AG04450 (cell line): ENCODE measurements at regions of chr13 and their contacts with region 1.

Region 1: DNA sequence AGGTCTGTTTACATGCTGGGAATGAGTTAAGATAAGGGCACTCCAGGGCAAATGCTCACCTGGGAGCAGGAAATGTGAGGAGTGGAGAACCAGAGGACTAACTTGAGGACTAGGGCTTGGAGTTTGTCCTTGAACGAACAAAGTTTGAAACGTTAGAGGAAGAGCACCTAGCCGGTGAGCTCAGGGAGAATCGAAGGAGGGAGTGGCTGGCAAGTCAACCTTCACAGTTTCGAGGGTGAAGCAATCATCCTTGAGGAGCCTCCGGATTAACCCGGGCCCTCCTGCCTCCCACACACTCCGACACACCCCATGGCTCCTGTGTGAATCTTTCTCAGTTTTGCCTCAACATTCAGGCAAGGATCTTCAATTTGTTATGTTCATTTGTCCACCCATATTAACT is 58.6 kb downstream of the LMO7 start:
- DNase-seq: no peak
- H3K4me3 ChIP-seq: no peak overlapping the region
- H3K27ac ChIP-seq: no peak overlapping the region
- H3K27me3 ChIP-seq: no peaks in the 10 kb centered on the region
- CTCF ChIP-seq: no peak

Region 2: DNA sequence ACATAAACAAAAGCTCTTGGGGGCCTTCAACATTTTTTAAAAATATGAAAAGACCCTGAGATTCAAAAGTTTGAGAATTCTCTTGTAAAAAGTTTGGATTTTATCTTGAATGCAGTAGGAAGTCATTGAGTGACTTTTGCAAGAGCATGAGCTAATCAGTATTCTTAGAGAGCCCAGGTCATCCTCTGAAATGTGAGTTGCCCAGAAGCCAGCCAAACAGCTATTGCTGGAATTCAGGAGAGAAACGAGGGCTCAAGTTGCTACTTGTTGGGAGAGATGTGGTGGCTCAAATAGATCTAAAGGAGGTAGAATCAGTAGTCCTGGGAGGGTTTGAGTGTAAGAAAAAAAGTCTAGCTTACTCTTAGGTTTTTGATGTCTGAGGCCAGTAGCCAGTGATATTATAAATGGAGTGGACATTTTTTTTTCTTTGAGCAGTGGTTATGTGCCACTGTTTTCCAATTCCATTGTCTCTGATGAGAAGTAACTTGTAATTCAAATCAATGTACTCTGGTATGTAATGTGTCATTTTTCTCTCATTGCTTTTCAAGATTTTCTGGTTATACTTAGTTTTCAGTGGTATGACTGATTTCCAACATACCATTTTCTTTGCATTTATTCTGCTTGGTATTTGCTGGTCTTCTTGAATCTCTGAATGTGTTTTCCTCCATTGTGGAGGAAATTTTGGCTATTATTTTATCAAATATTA is 27.9 kb before region 1 on chr13:
- CTCF ChIA-PET with region 1: interaction called, 16 read pairs
- POLR2A ChIA-PET with region 1: no interaction called
- DNase-seq: no peak
- H3K4me3 ChIP-seq: no peak overlapping the region
- H3K27ac ChIP-seq: no peak overlapping the region
- H3K27me3 ChIP-seq: no peaks in the 10 kb centered on the region
- CTCF ChIP-seq: no peak

Region 3: DNA sequence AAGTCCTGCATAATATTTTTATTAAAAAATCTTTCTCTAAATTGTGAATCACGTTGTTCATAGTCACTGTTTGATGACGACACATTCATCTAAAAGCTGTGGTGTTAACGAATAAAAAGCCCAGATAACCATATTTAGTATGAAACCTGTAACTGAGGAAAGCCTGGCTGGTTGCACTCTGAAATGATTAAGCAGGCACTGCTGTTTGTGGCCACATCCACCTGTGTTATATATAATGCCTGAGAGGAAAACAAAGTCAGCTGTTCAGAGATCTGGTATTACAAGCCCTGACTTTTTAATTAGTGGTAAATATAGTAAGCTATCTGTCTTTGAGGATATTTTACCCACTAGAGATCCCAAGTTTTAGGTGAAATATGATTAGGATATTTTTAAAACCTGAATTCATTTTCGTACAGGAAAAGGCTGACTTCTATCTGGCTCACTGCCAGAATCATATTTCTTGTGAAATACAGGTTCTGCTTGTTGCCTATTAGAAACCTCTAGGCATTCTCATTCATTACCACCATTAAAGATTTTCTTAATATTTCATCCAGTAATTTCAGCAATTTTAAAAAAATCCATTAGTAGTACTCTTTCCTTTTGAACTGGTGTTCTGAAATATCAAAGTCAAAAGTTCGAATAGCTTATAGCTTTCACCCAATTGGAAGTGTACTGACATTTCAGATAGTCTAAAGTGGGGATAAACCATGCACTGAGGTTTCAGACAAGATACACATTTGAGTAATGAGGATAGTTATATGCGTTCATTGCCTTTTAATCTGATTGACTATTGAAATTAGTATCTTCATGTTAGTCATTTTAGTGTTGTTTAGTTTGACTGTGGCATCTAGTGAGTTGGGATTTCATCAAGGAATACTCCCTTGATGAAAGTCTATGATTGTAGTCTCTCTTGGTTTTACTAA is 21.1 kb after region 1 on chr13:
- CTCF ChIA-PET with region 1: interaction called, 21 read pairs
- POLR2A ChIA-PET with region 1: no interaction called
- DNase-seq: no peak
- H3K4me3 ChIP-seq: no peak overlapping the region
- H3K27ac ChIP-seq: no peak overlapping the region
- H3K27me3 ChIP-seq: no peaks in the 10 kb centered on the region
- CTCF ChIP-seq: no peak

Region 4: DNA sequence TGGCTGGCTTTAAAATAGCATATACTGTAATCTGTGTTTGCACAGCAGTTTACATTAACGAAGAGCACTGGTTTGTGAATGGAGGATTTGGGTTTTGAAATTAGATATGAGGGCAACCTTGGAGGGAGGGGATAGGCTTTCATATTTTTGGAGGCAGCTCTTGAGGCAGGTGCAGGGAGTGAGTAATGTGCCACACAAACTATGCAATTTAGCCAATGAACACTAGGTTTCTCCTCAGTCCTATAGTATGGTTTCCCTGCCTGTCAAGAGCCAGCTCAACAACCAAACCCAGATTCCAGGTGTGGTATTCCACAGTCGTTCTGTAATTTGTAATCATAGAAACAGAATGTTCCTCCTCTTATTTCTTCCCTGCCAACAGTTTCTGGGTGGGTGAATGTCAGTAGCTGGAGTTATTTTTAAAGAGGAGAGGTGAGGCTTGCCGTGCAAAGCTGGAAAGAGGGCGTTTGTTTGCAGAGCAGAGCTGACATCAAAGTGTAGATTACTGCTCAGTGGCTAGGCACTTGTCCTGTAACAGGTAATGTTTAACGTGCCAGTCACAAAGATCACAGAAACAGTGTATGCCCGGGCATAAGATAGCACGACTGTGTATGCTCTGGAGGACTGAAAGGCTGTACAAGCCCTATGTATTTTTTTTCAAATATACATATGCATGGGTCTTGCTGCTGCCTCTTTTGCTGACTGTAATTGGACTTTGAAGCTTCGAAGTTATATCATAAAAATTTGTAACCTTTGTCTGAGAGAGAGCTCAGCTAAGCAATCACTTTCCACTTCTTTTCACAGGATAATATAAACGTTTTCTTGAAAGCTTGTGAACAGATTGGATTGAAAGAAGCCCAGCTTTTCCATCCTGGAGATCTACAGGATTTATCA is 65.7 kb after region 1 on chr13:
- CTCF ChIA-PET with region 1: interaction called, 13 read pairs
- POLR2A ChIA-PET with region 1: no interaction called
- DNase-seq: no peak
- H3K4me3 ChIP-seq: peak overlapping the region; percentile 18; the same call in 1 of the 2 replicates
- H3K27ac ChIP-seq: no peak overlapping the region
- H3K27me3 ChIP-seq: no peaks in the 10 kb centered on the region
- CTCF ChIP-seq: peak; percentile 31

Region 5: DNA sequence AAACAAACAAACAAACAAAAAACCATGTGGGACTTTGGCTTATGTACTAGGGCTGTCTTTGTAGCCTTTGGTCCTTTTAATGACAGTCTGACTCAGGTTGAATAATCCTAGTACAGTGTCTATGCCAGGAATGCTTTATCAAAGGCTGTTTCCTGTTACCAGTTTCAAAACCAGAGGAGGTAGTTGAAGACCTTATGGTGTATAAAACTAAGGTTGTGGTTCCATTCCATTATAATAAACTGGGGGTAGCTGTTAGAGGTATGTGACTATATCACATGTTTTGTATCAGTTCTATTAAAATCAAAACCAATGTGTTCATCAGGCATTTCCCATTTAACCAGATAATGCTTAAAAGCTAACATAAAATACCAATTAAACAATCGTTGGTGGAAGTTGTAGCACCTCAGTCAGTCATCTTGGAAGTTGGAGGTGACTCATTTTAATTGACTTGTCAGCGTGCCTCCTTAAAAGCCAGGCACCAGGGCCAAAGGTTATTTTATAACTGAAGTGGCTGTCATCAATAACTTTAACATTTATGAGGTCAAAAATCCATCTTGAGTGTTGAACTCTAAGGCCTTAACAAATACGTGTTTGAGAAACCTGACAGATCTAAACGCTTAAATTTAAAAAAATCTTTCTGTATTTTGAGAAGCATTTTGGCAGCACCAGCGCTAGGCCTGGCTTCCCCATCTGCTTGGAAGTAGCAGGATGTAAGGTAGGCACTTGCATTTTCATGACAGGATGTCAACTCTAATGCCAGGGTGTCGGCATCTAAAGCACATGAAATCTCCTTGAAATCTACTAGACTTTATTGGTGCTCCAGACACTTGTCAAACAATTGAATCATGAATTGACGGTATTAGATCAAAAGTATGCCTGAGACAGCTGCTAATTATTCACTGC is 103.9 kb after region 1 on chr13:
- CTCF ChIA-PET with region 1: interaction called, 13 read pairs
- POLR2A ChIA-PET with region 1: no interaction called
- DNase-seq: no peak
- H3K4me3 ChIP-seq: no peak overlapping the region
- H3K27ac ChIP-seq: no peak overlapping the region
- H3K27me3 ChIP-seq: no peaks in the 10 kb centered on the region
- CTCF ChIP-seq: no peak

Region 6: DNA sequence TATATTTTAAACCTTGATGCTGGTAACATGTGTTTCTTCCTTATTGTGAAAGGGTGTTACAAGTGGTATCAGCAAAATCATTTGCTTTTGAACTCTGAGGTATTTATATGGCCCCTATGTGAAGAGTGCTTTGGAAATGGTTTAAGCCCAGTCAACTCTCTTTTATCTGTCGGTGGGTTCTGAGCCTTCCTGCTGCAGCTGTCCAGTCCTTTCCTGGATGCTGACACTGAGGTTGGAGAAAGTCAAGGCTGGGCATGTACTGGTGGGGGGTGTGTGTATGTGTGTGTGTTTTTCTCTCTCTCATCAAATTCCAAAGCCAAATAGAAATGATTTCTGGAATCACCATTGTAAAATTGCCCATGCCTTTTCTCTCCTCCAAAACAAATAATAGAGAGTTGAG is 162.6 kb after region 1 on chr13:
- CTCF ChIA-PET with region 1: interaction called, 23 read pairs
- POLR2A ChIA-PET with region 1: no interaction called
- DNase-seq: no peak
- H3K4me3 ChIP-seq: no peak overlapping the region
- H3K27ac ChIP-seq: no peak overlapping the region
- H3K27me3 ChIP-seq: no peaks in the 10 kb centered on the region
- CTCF ChIP-seq: no peak

Region 7: GRCh38 chr13:75876360-75877050 is 181.8 kb after region 1 on chr13:
- CTCF ChIA-PET with region 1: interaction called, 105 read pairs
- POLR2A ChIA-PET with region 1: no interaction called
- DNase-seq: peak; percentile 26
- H3K4me3 ChIP-seq: no peak overlapping the region
- H3K27ac ChIP-seq: no peak overlapping the region
- H3K27me3 ChIP-seq: peaks cover 4% of the 10 kb centered on the region
- CTCF ChIP-seq: peak; percentile 92